Naive thymus-derived CD4-positive, alpha-beta T cell (primary cell): ENCODE measurements at regions of chr14 and their contacts with region 1.

Region 1: GRCh38 chr14:31194095-31194494 is 13.5 kb downstream of the HECTD1 start:
- DNase-seq: no peak
- ATAC-seq: no peak
- H3K4me3 ChIP-seq: no peak overlapping the region
- H3K4me3 Mint-ChIP-seq: no peak overlapping the region
- H3K27ac ChIP-seq: no peak overlapping the region
- H3K27ac Mint-ChIP-seq: no peak overlapping the region
- H3K4me1 ChIP-seq: peaks cover 4 to 12% of the 10 kb centered on the region in 2 donors
- H3K4me1 Mint-ChIP-seq: peaks cover 26 to 70% (median 57%) of the 10 kb centered on the region in 7 donors
- H3K27me3 ChIP-seq: no peaks in the 10 kb centered on the region
- H3K27me3 Mint-ChIP-seq: no peaks in the 10 kb centered on the region

Region 2: GRCh38 chr14:31180299-31181051 is 13.6 kb before region 1 on chr14:
- CTCF ChIA-PET with region 1: interaction called, 4 read pairs
- POLR2A ChIA-PET with region 1: interaction called, 3 read pairs
- intact Hi-C with region 1: loop called in 1 of 2 experiments (anchors 2 kb)
- DNase-seq: no peak
- ATAC-seq: no peak
- H3K4me3 ChIP-seq: no peak overlapping the region
- H3K4me3 Mint-ChIP-seq: no peak overlapping the region
- H3K27ac ChIP-seq: no peak overlapping the region
- H3K27ac Mint-ChIP-seq: peak overlapping the region in 5 of 9 donors; percentile 14 to 60 (median 36)
- H3K4me1 ChIP-seq: no peaks in the 10 kb centered on the region
- H3K4me1 Mint-ChIP-seq: peaks cover 0 to 24% (median 15%) of the 10 kb centered on the region in 7 donors
- H3K27me3 ChIP-seq: no peaks in the 10 kb centered on the region
- H3K27me3 Mint-ChIP-seq: no peaks in the 10 kb centered on the region

Region 3: DNA sequence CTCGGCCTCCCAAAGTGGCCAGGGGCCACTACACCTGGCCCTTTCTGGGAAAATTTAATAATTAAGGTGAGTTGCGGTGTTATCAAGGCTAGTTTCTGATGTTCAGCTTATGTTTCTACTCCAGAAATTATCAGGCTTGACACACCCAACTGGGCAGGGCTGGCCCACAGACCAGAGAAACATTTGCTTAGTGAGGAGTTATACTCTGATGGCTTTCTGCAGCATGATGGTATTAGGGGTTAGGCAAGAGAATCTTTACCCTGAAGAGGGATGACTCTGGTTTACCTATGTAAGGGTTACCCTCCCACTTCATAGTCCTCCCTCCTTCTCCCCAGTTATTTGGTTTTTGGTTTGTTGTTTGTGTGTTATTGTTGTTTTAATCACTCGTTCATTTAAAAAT is 38.0 kb after region 1 on chr14:
- CTCF ChIA-PET with region 1: no interaction called
- POLR2A ChIA-PET with region 1: no interaction called
- intact Hi-C with region 1: no loop called
- DNase-seq: no peak
- ATAC-seq: no peak
- H3K4me3 ChIP-seq: no peak overlapping the region
- H3K4me3 Mint-ChIP-seq: no peak overlapping the region
- H3K27ac ChIP-seq: no peak overlapping the region
- H3K27ac Mint-ChIP-seq: no peak overlapping the region
- H3K4me1 ChIP-seq: no peaks in the 10 kb centered on the region
- H3K4me1 Mint-ChIP-seq: no peaks in the 10 kb centered on the region
- H3K27me3 ChIP-seq: no peaks in the 10 kb centered on the region
- H3K27me3 Mint-ChIP-seq: peaks cover 0 to 9% (median 0%) of the 10 kb centered on the region in 5 donors

Region 4: DNA sequence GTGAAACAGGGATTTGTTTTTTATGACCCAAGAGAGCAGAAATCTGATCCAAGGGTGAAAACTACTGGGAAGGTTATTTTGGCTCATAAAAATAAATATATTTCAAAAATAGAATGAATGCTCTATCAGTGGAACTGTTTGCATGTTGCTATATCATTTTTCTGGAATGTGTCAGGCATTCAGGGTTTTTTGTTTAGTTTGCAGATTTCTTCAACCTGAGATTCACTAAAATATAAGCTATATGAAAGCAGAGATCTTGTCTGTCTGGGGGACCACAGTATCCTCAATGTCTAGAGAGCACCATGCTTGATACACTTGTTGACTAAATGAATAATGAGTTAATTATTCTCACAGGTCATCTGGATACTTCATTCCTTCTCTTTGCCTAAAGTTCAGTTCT is 532.2 kb after region 1 on chr14:
- CTCF ChIA-PET with region 1: no interaction called
- POLR2A ChIA-PET with region 1: no interaction called
- intact Hi-C with region 1: no loop called
- DNase-seq: no peak
- ATAC-seq: no peak
- H3K4me3 ChIP-seq: no peak overlapping the region
- H3K4me3 Mint-ChIP-seq: no peak overlapping the region
- H3K27ac ChIP-seq: no peak overlapping the region
- H3K27ac Mint-ChIP-seq: no peak overlapping the region
- H3K4me1 ChIP-seq: no peaks in the 10 kb centered on the region
- H3K4me1 Mint-ChIP-seq: peaks cover 0 to 8% (median 0%) of the 10 kb centered on the region in 7 donors
- H3K27me3 ChIP-seq: no peaks in the 10 kb centered on the region
- H3K27me3 Mint-ChIP-seq: no peaks in the 10 kb centered on the region